A549 (cell line): ENCODE measurements at regions of chr17 and their contacts with region 1.

Region 1: DNA sequence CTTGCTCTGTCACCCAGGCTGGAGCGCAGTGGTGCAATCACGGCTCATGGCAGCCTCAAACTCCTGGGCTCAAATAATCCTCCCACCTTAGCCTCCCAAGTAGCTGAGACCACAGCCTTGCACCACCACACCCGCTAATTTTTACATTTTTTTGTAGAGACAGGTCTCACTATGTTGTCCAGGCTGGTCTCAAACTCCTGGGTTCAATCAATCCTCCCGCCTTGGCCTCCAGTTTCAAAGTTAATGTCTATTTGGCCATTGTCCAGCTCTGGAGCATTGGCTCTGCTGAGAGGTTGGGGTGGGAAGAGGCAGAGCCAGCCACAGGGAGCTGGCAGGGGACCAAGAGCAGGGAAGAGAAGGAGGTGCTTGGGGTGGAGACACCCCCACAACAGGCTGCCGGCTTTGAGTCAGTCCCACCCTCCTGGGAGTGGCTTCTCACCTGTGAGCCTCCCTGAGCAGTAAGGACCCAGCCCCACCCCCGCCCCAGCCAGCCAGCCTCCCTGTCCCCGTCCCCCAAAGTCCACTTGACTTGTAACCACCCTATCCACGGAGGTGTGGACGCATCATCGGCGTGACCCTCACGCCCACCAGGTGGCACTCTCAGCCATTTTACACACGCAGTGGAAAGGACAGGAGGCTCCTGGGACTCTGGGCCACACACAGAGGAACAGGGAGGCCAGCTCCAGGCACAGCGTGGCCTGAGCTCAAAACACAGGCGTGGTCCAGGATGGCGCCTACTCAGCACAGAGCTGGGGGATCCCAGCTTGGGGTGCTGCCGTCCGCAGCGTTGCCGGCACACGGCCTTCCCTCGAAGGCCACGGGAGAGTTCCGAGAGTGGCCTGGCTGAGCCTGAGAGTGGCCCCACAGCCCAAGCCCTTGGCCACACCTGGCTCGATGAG is 22.8 kb upstream of the PVALEF start:
- DNase-seq: peak; percentile 85 to 90
- ATAC-seq: peak; percentile 91 to 98
- H3K4me3 ChIP-seq: no peak overlapping the region
- H3K27ac ChIP-seq: peak overlapping the region; percentile 49 to 61; a peak in 5 of 6 replicates
- H3K4me1 ChIP-seq: peaks cover 10% of the 10 kb centered on the region
- CTCF ChIP-seq: peak; percentile 87
- EP300 ChIP-seq: no peak
- POLR2A ChIP-seq: no peak
- RAD21 ChIP-seq: peak; percentile 87 to 88

Region 2: GRCh38 chr17:81002409-81003361 is 139.9 kb before region 1 on chr17:
- CTCF ChIA-PET with region 1: no interaction called
- POLR2A ChIA-PET with region 1: no interaction called
- DNase-seq: no peak
- ATAC-seq: peak; percentile 15 to 26; a peak in 4 of 6 replicates
- H3K4me3 ChIP-seq: no peak overlapping the region
- H3K27ac ChIP-seq: peak overlapping the region in 1 of 2 experiments; percentile 18; a peak in 1 of 6 replicates
- H3K4me1 ChIP-seq: peaks cover 20% of the 10 kb centered on the region
- CTCF ChIP-seq: no peak
- EP300 ChIP-seq: no peak
- POLR2A ChIP-seq: no peak
- RAD21 ChIP-seq: no peak

Region 3: GRCh38 chr17:81094509-81095382 is 47.8 kb before region 1 on chr17:
- CTCF ChIA-PET with region 1: interaction called, 16 read pairs
- POLR2A ChIA-PET with region 1: no interaction called
- DNase-seq: peak; percentile 91 to 95
- ATAC-seq: peak; percentile 59 to 65
- H3K4me3 ChIP-seq: no peak overlapping the region
- H3K27ac ChIP-seq: peak overlapping the region; percentile 87 to 92
- H3K4me1 ChIP-seq: peaks cover 72% of the 10 kb centered on the region
- CTCF ChIP-seq: no peak
- EP300 ChIP-seq: no peak
- POLR2A ChIP-seq: no peak
- RAD21 ChIP-seq: peak in 1 of 2 experiments; percentile 12; a peak in 1 of 5 replicates

Region 4: GRCh38 chr17:81153340-81153803 is 10.8 kb after region 1 on chr17:
- CTCF ChIA-PET with region 1: interaction called, 121 read pairs
- POLR2A ChIA-PET with region 1: no interaction called
- DNase-seq: no peak
- ATAC-seq: no peak
- H3K4me3 ChIP-seq: no peak overlapping the region
- H3K27ac ChIP-seq: no peak overlapping the region
- H3K4me1 ChIP-seq: no peaks in the 10 kb centered on the region
- CTCF ChIP-seq: no peak
- EP300 ChIP-seq: no peak
- POLR2A ChIP-seq: no peak
- RAD21 ChIP-seq: no peak

Region 5: DNA sequence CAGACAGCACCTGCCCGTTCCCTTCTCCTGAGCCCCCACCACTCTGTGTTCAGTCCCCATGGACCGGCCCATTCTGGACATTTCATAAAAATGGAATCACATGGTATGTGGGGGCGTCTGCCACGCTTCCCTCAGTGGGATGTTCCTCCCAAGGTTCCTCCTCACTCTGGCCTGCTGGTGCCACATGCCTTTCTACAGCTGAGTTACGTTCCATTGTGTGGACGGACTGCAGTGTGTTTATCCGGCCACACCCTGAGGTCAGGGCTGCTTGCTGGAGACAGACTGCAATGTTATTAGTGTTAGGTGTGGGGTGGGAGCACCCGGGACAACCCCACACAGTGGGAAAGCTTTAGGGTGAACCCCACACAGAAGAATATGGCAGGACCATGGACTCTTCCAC is 29.4 kb after region 1 on chr17:
- CTCF ChIA-PET with region 1: interaction called, 22 read pairs
- POLR2A ChIA-PET with region 1: no interaction called
- DNase-seq: no peak
- ATAC-seq: no peak
- H3K4me3 ChIP-seq: no peak overlapping the region
- H3K27ac ChIP-seq: no peak overlapping the region
- H3K4me1 ChIP-seq: no peaks in the 10 kb centered on the region
- CTCF ChIP-seq: no peak
- EP300 ChIP-seq: no peak
- POLR2A ChIP-seq: no peak
- RAD21 ChIP-seq: no peak

Region 6: GRCh38 chr17:81184555-81184954 is 42.0 kb after region 1 on chr17:
- CTCF ChIA-PET with region 1: interaction called, 31 read pairs
- POLR2A ChIA-PET with region 1: no interaction called
- DNase-seq: no peak
- ATAC-seq: peak in 1 of 2 experiments; percentile 13; a peak in 2 of 6 replicates
- H3K4me3 ChIP-seq: no peak overlapping the region
- H3K27ac ChIP-seq: no peak overlapping the region
- H3K4me1 ChIP-seq: no peaks in the 10 kb centered on the region
- CTCF ChIP-seq: no peak
- EP300 ChIP-seq: no peak
- POLR2A ChIP-seq: no peak
- RAD21 ChIP-seq: no peak

Region 7: GRCh38 chr17:81200695-81201580 is 58.4 kb after region 1 on chr17:
- CTCF ChIA-PET with region 1: interaction called, 175 read pairs
- POLR2A ChIA-PET with region 1: no interaction called
- DNase-seq: peak; percentile 81 to 92
- ATAC-seq: peak; percentile 86 to 96
- H3K4me3 ChIP-seq: no peak overlapping the region
- H3K27ac ChIP-seq: peak overlapping the region in 1 of 2 experiments; percentile 66; a peak in 2 of 6 replicates
- H3K4me1 ChIP-seq: no peaks in the 10 kb centered on the region
- CTCF ChIP-seq: peak; percentile 46
- EP300 ChIP-seq: no peak
- POLR2A ChIP-seq: no peak
- RAD21 ChIP-seq: peak; percentile 38 to 49; a peak in 3 of 5 replicates

Region 8: GRCh38 chr17:81238817-81239600 is 96.5 kb after region 1 on chr17 and contains the starts of genes NDUFAF8 and TEPSIN:
- CTCF ChIA-PET with region 1: interaction called, 153 read pairs
- POLR2A ChIA-PET with region 1: no interaction called
- DNase-seq: peak; percentile 100
- ATAC-seq: peak; percentile 88 to 97
- H3K4me3 ChIP-seq: peak within 1 kb of the TSS; percentile 80
- H3K27ac ChIP-seq: peak within 1 kb of the TSS; percentile 91 to 94
- H3K4me1 ChIP-seq: peaks cover 19% of the 10 kb centered on the region
- CTCF ChIP-seq: no peak
- EP300 ChIP-seq: no peak
- POLR2A ChIP-seq: peak; percentile 56
- RAD21 ChIP-seq: no peak
- polyA plus RNA-seq, gene NDUFAF8: 198 and 308 TPM in 2 replicates
- polyA plus RNA-seq, gene TEPSIN: 12.5 TPM in 2 replicates